Tibial artery (tissue), 4 donors: ENCODE measurements at regions of chr6 and their contacts with region 1.

Region 1: GRCh38 chr6:144232176-144232831 is 52.8 kb upstream of the UTRN start:
- DNase-seq: no peak
- H3K4me3 ChIP-seq: no peak overlapping the region
- H3K27ac ChIP-seq: peak overlapping the region; percentile 11 to 53
- H3K4me1 ChIP-seq: peaks cover 0 to 28% (median 8%) of the 10 kb centered on the region in 4 donors
- H3K27me3 ChIP-seq: no peaks in the 10 kb centered on the region
- CTCF ChIP-seq: no peak

Region 2: DNA sequence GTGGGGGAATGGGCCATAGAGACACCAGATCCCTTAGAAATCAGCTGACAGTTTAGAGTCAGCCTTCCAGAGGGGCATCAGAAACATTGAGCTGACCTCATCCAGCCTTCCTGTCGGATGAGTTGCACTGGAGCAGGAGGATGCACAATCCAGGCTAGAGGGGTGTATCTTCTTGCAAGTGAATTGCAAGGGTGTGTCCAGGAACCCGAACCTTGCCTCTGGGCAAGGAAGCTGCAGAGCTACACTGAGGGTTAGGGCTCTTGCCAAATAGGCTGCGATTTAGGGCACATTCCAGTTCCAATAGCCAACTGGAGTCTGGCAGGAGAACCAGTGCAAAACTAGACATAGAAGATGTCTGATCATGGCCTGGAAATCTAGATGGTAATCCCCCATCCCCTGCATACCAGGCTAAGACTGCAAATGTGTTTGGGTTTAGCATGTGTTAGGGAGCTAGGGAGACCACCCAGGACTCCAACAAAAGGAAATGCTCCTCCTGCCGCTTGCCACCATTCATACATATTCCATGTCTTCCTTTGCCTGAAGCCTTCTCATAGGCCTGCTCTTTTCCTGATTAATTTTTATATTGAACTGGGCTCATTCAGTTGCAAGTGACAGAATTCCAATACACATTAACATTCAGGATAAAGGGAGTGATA is 46.5 kb after region 1 on chr6:
- intact Hi-C with region 1: loop called (anchors 5 kb)
- DNase-seq: no peak
- H3K4me3 ChIP-seq: no peak overlapping the region
- H3K27ac ChIP-seq: no peak overlapping the region
- H3K4me1 ChIP-seq: peaks cover 0 to 7% (median 0%) of the 10 kb centered on the region in 4 donors
- H3K27me3 ChIP-seq: no peaks in the 10 kb centered on the region
- CTCF ChIP-seq: no peak

Region 3: DNA sequence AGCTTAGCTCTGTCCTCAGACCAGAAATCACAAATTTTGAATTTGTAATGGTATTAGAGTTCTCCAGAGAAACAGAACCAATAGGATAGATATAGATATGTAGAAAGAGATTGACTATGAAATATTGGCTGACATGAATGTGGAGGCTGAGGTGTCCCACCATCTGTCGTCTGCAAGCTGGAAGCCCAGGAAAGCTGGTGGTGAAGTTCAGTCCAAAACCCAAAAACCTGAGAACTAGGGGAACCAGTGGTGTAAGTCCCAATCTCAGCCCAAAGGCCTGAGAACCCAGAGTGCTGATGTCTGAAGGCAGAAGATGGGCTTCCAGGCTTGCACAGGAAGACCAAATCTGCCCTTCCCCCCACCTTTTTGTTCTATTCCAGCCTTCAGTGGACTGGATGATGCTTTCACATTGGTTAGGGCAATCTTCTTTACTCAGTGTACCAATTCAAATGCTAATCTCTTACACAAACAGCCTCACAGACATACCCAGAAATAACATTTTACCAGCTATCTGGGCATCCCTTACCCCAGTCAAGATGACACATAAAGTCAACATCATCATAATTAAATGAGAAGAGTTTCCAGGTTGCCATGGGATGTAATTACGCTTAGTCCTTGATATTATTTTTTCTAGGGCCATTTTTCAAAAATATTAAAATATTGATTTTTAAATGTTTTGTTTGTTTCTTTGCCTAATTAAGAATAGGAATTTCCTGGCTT is 623.7 kb after region 1 on chr6:
- intact Hi-C with region 1: no loop called
- DNase-seq: no peak
- H3K4me3 ChIP-seq: no peak overlapping the region
- H3K27ac ChIP-seq: no peak overlapping the region
- H3K4me1 ChIP-seq: no peaks in the 10 kb centered on the region
- H3K27me3 ChIP-seq: no peaks in the 10 kb centered on the region
- CTCF ChIP-seq: no peak